MCF 10A (cell line): ENCODE measurements at regions of chr3 and their contacts with region 1.

Region 1: DNA sequence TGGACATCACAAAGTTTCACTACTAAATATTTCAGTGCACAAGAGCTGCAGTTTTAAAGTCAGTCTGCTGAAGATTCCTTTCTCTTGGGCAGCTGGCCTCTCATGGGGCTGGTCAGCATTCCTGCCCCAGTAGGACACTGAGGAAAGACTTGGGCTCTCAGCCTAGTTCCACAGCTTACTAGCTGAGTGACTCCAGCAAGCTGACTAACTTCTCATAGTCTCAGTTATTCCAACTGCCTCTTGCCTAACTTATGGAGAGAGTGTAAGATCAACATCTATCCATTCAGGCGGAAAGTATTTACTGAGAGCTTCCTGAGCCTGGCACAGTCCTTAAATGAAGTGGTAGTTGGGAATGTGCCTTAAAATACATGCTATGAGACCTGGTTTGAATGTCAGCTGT is 27.0 kb downstream of the TM4SF4 start:
- DNase-seq: peak; percentile 11
- H3K4me3 Mint-ChIP-seq: no peak overlapping the region
- H3K27ac Mint-ChIP-seq: no peak overlapping the region
- H3K4me1 Mint-ChIP-seq: peaks cover 4% of the 10 kb centered on the region
- H3K27me3 Mint-ChIP-seq: no peaks in the 10 kb centered on the region
- CTCF ChIP-seq: no peak

Region 2: DNA sequence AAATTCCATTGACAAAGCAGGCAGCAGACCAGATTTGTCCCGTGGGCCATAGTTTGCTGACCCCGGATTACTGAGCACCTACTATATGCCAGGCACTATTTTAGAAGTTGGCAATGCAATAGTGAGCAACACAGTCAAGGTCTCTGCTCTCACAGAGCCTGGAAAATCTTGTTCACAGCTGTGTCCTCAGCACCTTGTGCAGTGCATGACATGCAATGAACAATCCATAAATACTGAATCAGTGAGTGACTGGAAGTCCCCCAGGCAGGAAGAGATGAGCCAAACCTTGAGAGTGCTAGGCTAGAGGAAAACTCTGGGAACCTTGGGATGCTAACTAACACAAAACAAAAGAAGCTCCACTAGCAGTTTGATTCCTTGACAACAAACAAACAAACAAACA is 138.5 kb before region 1 on chr3:
- CTCF ChIA-PET with region 1: no interaction called
- POLR2A ChIA-PET with region 1: no interaction called
- intact Hi-C with region 1: no loop called
- DNase-seq: no peak
- H3K4me3 Mint-ChIP-seq: no peak overlapping the region
- H3K27ac Mint-ChIP-seq: no peak overlapping the region
- H3K4me1 Mint-ChIP-seq: peaks cover 13% of the 10 kb centered on the region
- H3K27me3 Mint-ChIP-seq: no peaks in the 10 kb centered on the region
- CTCF ChIP-seq: no peak

Region 3: GRCh38 chr3:149489060-149489690 is 12.3 kb before region 1 on chr3:
- CTCF ChIA-PET with region 1: interaction called, 14 read pairs
- POLR2A ChIA-PET with region 1: interaction called, 4 read pairs
- intact Hi-C with region 1: no loop called
- DNase-seq: peak; percentile 25
- H3K4me3 Mint-ChIP-seq: no peak overlapping the region
- H3K27ac Mint-ChIP-seq: no peak overlapping the region
- H3K4me1 Mint-ChIP-seq: no peaks in the 10 kb centered on the region
- H3K27me3 Mint-ChIP-seq: peaks cover 15% of the 10 kb centered on the region
- CTCF ChIP-seq: peak; percentile 45

Region 4: GRCh38 chr3:149512209-149512782 is 10.8 kb after region 1 on chr3:
- CTCF ChIA-PET with region 1: interaction called, 11 read pairs
- POLR2A ChIA-PET with region 1: interaction called, 3 read pairs
- intact Hi-C with region 1: no loop called
- DNase-seq: peak; percentile 67
- H3K4me3 Mint-ChIP-seq: no peak overlapping the region
- H3K27ac Mint-ChIP-seq: no peak overlapping the region
- H3K4me1 Mint-ChIP-seq: peaks cover 19% of the 10 kb centered on the region
- H3K27me3 Mint-ChIP-seq: no peaks in the 10 kb centered on the region
- CTCF ChIP-seq: peak; percentile 61